Activated T-helper 2 cell treated with anti-CD3 and anti-CD28 coated beads, Interferon-gamma antibody, Interleukin-2, Interleukin-4, amounts not matched to agents 10 μg/mL and 5 μg/mL and 100 μg/mL, durations not matched to agents 14 hours and 24 hours and 36 hours (primary cell): ENCODE measurements at regions of chr5 and their contacts with region 1.

Region 1: DNA sequence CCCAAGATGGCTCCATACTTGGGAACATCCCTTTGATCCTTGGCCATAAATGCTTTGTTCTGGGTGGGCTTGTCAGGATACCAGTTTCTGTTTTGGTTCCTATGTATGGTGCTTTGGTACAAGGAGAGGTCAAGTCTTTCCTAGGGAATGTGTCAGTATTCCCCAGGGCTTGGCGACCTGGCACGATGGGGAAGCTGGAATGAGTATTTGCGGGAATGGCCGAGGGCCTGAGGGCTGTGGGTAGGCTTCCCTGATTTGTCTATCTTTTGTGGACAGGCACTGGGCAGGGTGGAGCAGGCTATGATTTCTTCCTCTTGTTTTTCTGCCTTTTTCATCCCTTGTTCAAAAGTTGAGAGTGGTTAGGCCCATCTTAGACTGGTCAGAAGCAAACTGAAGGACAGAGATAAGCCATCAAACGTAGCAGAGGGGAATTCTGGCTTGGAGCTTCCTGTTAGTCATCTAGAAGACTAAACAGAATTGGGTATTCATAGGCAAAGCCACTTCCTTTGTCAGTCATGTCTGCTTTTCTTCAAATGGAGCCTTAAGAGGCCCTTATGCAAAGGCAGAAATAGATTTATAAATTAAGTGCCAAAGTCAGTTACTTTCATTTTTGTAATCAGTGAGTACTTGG is 13.7 kb downstream of the DOCK2 start:
- DNase-seq: no peak
- H3K4me3 Mint-ChIP-seq: peak overlapping the region; percentile 67
- H3K27ac Mint-ChIP-seq: peak overlapping the region; percentile 95
- H3K4me1 Mint-ChIP-seq: peaks cover 95% of the 10 kb centered on the region
- H3K27me3 Mint-ChIP-seq: no peaks in the 10 kb centered on the region

Region 2: GRCh38 chr5:168579488-168580226 is 1071.2 kb before region 1 on chr5:
- intact Hi-C with region 1: loop called (anchors 10 kb)
- DNase-seq: peak; percentile 97
- H3K4me3 Mint-ChIP-seq: peak overlapping the region; percentile 77
- H3K27ac Mint-ChIP-seq: peak overlapping the region; percentile 94
- H3K4me1 Mint-ChIP-seq: peaks cover 32% of the 10 kb centered on the region
- H3K27me3 Mint-ChIP-seq: no peaks in the 10 kb centered on the region

Region 3: GRCh38 chr5:169670769-169671525 is 20.1 kb after region 1 on chr5:
- intact Hi-C with region 1: loop called (anchors 1 kb)
- DNase-seq: no peak
- H3K4me3 Mint-ChIP-seq: no peak overlapping the region
- H3K27ac Mint-ChIP-seq: peak overlapping the region; percentile 74
- H3K4me1 Mint-ChIP-seq: peaks cover 36% of the 10 kb centered on the region
- H3K27me3 Mint-ChIP-seq: no peaks in the 10 kb centered on the region

Region 4: DNA sequence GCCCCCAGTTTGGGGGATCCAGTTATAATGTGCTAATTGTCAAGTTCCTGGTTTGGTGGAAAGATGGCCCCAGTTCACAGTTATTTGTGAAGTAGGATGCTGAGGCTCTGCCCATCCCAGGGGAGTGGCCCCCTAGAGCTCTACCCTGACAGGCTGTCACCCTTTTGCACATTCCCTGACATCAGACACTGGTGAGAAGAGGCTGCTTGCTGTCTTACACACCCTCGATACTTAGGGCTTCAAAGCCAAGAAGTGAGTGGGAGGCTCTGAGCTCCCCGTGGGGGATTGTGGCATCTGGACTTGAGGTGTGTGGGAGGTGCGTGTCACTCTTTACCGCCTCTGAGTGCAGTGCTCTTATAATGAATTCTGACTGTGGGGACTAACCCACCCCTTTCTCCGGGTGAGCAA is 154.7 kb after region 1 on chr5:
- intact Hi-C with region 1: loop called (anchors 1 kb)
- DNase-seq: peak; percentile 41
- H3K4me3 Mint-ChIP-seq: peak overlapping the region; percentile 37
- H3K27ac Mint-ChIP-seq: peak overlapping the region; percentile 88
- H3K4me1 Mint-ChIP-seq: peaks cover 48% of the 10 kb centered on the region
- H3K27me3 Mint-ChIP-seq: no peaks in the 10 kb centered on the region

Region 5: GRCh38 chr5:171387345-171387969 is 1736.6 kb after region 1 on chr5 and contains the start of gene NPM1:
- intact Hi-C with region 1: loop called (anchors 5 kb)
- DNase-seq: peak; percentile 97
- H3K4me3 Mint-ChIP-seq: peak within 1 kb of the TSS; percentile 94
- H3K27ac Mint-ChIP-seq: peak within 1 kb of the TSS; percentile 97
- H3K4me1 Mint-ChIP-seq: peaks cover 31% of the 10 kb centered on the region
- H3K27me3 Mint-ChIP-seq: peaks cover 3% of the 10 kb centered on the region
- total RNA-seq, gene NPM1: 2,774 and 3,051 TPM in 2 replicates